K562 (cell line): ENCODE measurements at regions of chr15 and their contacts with region 1.

Region 1: DNA sequence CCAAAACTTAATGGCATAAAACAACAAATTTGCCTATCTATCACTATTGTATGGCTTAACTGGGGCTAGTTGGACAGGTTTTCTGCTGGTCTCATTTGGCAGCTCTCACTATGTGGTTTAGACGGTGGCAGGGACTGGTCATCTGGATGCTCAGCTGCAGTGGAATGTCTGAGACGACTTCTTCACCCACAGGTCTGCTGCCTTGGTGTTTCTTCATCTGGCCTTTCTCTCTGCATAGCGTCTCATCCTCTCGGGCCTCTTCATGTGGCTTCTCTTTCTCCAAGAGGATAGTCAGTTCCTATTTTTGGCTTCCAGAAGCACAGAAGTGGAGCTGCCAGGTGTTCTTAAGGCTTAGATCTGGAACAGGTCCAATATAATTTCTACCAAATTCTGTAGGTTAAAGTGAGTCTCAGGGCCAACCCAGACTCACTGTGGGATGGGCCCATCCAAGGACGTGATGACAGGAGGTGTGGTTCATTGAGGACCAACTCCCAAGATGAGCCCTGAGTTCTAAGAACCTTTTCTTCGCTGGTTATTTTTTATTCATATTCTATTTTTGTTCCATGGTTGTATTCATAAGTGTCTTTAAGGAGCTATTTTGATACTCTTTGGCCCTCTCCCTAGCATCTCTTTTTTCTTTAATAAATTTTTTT is 18.6 kb downstream of the UBE2Q2 start:
- DNase-seq: no peak
- ATAC-seq: 0 out of 3 replicates have a peak, but pooled peaks have one; percentile 42
- H3K4me3 ChIP-seq: no peak overlapping the region
- H3K27ac ChIP-seq: no peak overlapping the region
- H3K4me1 ChIP-seq: peaks cover 0 to 17% of the 10 kb centered on the region in 2 experiments; a peak in 2 of 5 replicates
- H3K27me3 ChIP-seq: no peaks in the 10 kb centered on the region
- CTCF ChIP-seq: no peak
- EP300 ChIP-seq: no peak
- POLR2A ChIP-seq: no peak
- RAD21 ChIP-seq: no peak

Region 2: DNA sequence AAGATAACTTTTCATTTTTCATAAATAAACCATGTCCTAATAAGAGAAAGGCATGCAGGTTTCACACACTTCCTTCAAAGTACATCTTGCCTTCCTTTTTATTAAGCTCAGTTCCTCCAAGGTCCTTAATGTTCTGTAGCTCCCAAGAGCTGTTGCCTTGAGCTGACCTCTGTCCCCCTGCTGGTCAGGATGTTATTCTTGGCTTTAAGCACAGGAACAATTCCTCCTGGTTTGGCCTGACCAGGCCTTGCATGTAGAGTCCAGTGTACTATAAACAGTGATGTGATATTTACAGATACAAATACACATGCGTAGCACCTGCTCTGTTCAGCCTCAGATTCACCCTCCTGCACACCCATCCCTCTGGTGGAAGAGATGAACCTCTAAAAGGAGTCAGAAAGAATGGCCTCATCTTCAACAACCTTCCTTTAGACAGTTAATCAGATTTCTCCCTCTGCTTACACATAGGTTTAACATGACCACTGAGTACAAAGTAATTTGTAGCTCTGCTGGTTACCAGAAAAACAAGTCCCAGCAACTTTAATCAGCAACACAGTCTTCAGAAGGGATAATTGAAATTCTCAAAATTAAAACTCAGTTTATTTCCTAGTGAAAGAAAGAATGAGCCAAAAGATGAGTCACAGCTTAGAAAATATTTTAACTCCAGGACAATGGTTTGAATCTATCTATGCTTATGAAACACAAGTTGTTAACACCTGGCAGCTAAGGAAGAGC is 329.3 kb before region 1 on chr15:
- CTCF ChIA-PET with region 1: no interaction called
- POLR2A ChIA-PET with region 1: no interaction called
- in situ Hi-C with region 1: no loop called
- intact Hi-C with region 1: no loop called
- DNase-seq: peak in 3 of 4 experiments; percentile 33 to 76 (median 47)
- ATAC-seq: peak; percentile 96
- H3K4me3 ChIP-seq: no peak overlapping the region
- H3K27ac ChIP-seq: peak overlapping the region; percentile 1; the same call in 1 of the 3 replicates
- H3K4me1 ChIP-seq: no peaks in the 10 kb centered on the region; a peak in 1 of 5 replicates
- H3K27me3 ChIP-seq: no peaks in the 10 kb centered on the region
- CTCF ChIP-seq: peak; percentile 59 to 68 (median 66)
- EP300 ChIP-seq: no peak
- POLR2A ChIP-seq: no peak
- RAD21 ChIP-seq: peak in 1 of 2 experiments; percentile 45; a peak in 2 of 4 replicates

Region 3: GRCh38 chr15:75723847-75724660 is 137.8 kb before region 1 on chr15:
- CTCF ChIA-PET with region 1: no interaction called
- POLR2A ChIA-PET with region 1: no interaction called
- in situ Hi-C with region 1: no loop called
- intact Hi-C with region 1: no loop called
- DNase-seq: peak; percentile 70 to 83 (median 77)
- ATAC-seq: peak; percentile 81
- H3K4me3 ChIP-seq: no peak overlapping the region
- H3K27ac ChIP-seq: no peak overlapping the region; the same call in 2 of the 3 replicates
- H3K4me1 ChIP-seq: peaks cover 11 to 43% of the 10 kb centered on the region in 2 experiments; a peak in 4 of 5 replicates
- H3K27me3 ChIP-seq: peaks cover 0 to 32% of the 10 kb centered on the region in 2 experiments; a peak in 2 of 5 replicates
- CTCF ChIP-seq: no peak
- EP300 ChIP-seq: no peak
- POLR2A ChIP-seq: no peak
- RAD21 ChIP-seq: no peak

Region 4: GRCh38 chr15:75921729-75922703 is 60.1 kb after region 1 on chr15:
- CTCF ChIA-PET with region 1: interaction called, 10 read pairs
- POLR2A ChIA-PET with region 1: no interaction called
- in situ Hi-C with region 1: no loop called
- intact Hi-C with region 1: no loop called
- DNase-seq: peak in 2 of 4 experiments; percentile 38 to 84
- ATAC-seq: peak; percentile 99
- H3K4me3 ChIP-seq: no peak overlapping the region
- H3K27ac ChIP-seq: no peak overlapping the region
- H3K4me1 ChIP-seq: no peaks in the 10 kb centered on the region
- H3K27me3 ChIP-seq: no peaks in the 10 kb centered on the region
- CTCF ChIP-seq: peak; percentile 71 to 86 (median 72)
- EP300 ChIP-seq: no peak
- POLR2A ChIP-seq: no peak
- RAD21 ChIP-seq: peak; percentile 86 to 94